Mammary epithelial cell (primary cell): ENCODE measurements at regions of chr5 and their contacts with region 1.

Region 1: GRCh38 chr5:61790678-61791077 is 458.6 kb downstream of the ZSWIM6 start:
- DNase-seq: peak; percentile 82
- H3K4me3 ChIP-seq: no peak overlapping the region
- H3K27ac ChIP-seq: no peak overlapping the region
- H3K4me1 ChIP-seq: peaks cover 10% of the 10 kb centered on the region
- H3K27me3 ChIP-seq: no peaks in the 10 kb centered on the region
- CTCF ChIP-seq: no peak

Region 2: GRCh38 chr5:61486476-61486875 is 304.2 kb before region 1 on chr5:
- CTCF ChIA-PET with region 1: no interaction called
- dilution Hi-C with region 1: no loop called
- in situ Hi-C with region 1: no loop called
- intact Hi-C with region 1: no loop called
- DNase-seq: no peak
- H3K4me3 ChIP-seq: no peak overlapping the region
- H3K27ac ChIP-seq: no peak overlapping the region
- H3K4me1 ChIP-seq: no peaks in the 10 kb centered on the region
- H3K27me3 ChIP-seq: no peaks in the 10 kb centered on the region
- CTCF ChIP-seq: no peak

Region 3: GRCh38 chr5:61831736-61832135 is 41.1 kb after region 1 on chr5:
- CTCF ChIA-PET with region 1: no interaction called
- dilution Hi-C with region 1: loop called (anchors 5 kb)
- in situ Hi-C with region 1: no loop called
- intact Hi-C with region 1: no loop called
- DNase-seq: no peak
- H3K4me3 ChIP-seq: no peak overlapping the region
- H3K27ac ChIP-seq: no peak overlapping the region
- H3K4me1 ChIP-seq: no peaks in the 10 kb centered on the region
- H3K27me3 ChIP-seq: no peaks in the 10 kb centered on the region
- CTCF ChIP-seq: no peak

Region 4: GRCh38 chr5:62065050-62065449 is 274.4 kb after region 1 on chr5:
- CTCF ChIA-PET with region 1: no interaction called
- dilution Hi-C with region 1: no loop called
- in situ Hi-C with region 1: no loop called
- intact Hi-C with region 1: no loop called
- DNase-seq: no peak
- H3K4me3 ChIP-seq: no peak overlapping the region
- H3K27ac ChIP-seq: no peak overlapping the region
- H3K4me1 ChIP-seq: no peaks in the 10 kb centered on the region
- H3K27me3 ChIP-seq: no peaks in the 10 kb centered on the region
- CTCF ChIP-seq: no peak